ENCODE measurements at regions of chr16 and their contacts with region 1.

Region 1: DNA sequence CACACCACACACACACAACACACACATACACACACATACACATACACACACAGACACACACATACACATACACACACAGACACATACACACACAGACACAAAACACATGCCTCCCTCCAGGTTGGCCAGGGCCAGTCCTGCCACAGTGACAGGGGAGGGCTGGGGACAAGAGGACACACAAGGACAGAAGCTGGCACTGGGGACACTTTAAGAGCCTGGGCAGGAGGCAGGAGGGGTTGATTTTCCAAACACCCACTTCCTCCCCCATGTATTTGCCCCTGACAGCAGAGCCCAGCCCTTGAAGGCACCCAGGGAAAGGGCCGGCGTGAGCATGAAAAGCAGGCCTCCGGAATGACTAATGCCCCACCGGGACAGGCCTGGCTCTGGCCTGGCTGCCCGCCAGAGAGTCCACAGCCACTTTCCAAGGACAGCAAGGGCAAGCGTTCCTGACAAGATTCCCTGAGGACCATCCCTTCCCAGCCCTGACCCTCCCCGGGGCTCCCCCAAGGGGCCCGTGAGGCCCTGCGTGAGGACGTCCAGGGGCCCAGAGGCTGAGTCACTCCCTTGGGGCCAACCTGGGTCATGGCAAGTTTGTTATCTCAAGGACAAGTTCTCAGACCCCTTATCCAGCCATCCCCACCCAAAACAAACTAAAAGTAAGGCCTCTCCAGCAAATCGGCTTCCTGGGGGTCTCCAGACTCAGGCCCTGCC is 235.6 kb downstream of the ZNF423 start:
- DNase-seq: peak; percentile 89
- H3K4me3 ChIP-seq: no peak overlapping the region
- H3K27ac ChIP-seq: peak overlapping the region; percentile 64 to 76 (median 74)
- H3K4me1 ChIP-seq: peaks cover 0 to 25% (median 22%) of the 10 kb centered on the region in 4 donors
- H3K27me3 ChIP-seq: no peaks in the 10 kb centered on the region
- CTCF ChIP-seq: no peak
- EP300 ChIP-seq: no peak
- POLR2A ChIP-seq: no peak

Region 2: DNA sequence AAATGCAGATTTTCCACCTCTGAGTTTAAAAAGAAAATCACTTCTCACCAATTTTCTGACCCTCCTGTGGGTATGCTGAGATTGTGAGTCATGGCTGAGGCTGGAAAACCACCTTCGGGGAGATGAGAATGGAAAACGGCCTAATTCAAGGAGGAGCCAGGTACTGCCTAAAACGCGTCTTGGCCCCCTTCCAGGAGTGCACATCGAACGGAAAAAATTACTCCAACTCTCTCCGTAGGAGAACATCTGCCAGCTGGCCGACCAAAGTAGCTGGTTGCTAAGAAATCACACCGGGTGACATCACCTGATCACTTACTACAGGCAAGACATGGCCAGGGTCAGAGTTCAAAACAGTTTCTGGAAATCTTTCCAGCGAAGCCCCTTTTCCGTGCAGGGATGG is 128.0 kb after region 1 on chr16:
- intact Hi-C with region 1: loop called (anchors 10 kb)
- DNase-seq: peak; percentile 81
- H3K4me3 ChIP-seq: no peak overlapping the region
- H3K27ac ChIP-seq: no peak overlapping the region
- H3K4me1 ChIP-seq: peaks cover 0 to 22% (median 19%) of the 10 kb centered on the region in 4 donors
- H3K27me3 ChIP-seq: no peaks in the 10 kb centered on the region
- CTCF ChIP-seq: no peak
- EP300 ChIP-seq: no peak
- POLR2A ChIP-seq: no peak